ENCODE measurements at regions of chr17 and their contacts with region 1.

Region 1: DNA sequence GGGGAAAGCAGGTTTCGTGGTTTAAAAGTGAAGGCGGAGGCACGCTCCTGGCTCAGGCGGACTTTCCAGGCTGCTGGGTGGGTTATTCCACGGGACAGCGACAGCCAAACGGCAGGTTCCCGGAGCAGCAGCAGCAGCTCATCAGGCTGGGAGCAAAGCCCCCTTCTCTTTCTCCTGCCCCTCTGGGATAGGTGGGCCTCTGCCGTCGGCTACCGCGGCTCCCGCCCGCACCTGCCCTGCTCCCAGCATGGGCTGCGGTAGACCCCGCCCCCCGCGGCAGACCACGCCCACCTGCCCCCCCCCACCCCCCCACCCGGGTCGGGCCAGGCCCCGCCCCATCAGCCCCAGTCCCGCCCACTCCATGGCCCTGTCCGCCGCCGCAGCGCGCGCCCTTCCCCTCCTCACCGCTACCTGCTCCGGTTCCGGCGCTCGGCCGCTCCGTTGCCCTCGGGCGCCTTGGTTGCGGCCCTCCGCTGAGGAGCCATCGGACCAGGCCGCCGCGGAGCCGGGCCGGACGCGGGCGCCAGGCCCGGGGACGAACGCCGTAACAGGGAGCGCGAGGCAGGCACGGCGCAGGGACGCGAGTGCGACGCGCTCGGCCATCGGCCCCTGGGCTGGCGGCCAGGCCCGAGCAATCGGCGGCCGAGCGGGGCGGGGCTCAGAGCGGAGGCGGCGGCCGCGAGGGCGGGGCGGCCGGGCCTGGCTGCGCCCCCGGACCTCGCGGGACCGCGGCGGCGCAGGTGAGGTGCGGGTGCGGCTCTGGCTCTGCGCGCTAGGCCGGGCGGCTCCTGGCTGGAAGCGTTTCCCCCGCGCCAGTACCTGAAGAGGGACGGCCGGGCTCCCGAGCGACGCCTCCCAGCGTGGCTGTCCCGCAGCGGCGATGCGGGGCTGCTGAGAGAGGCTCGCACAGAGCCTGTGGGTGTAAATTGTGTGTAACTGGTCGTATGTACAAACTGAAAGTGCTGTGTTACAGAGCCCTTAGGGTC is at the starts of genes HEXD and OGFOD3:
- DNase-seq: peak; percentile 95
- ATAC-seq: peak; percentile 87
- H3K4me3 Mint-ChIP-seq: peak within 1 kb of the TSS; percentile 83
- H3K27ac Mint-ChIP-seq: peak within 1 kb of the TSS; percentile 69
- H3K4me1 Mint-ChIP-seq: peaks cover 29% of the 10 kb centered on the region
- H3K27me3 Mint-ChIP-seq: no peaks in the 10 kb centered on the region
- CTCF ChIP-seq: no peak
- total RNA-seq, gene HEXD: 69.5 and 88.8 TPM in 2 replicates
- total RNA-seq, gene OGFOD3: 29.5 and 35.0 TPM in 2 replicates

Region 2: GRCh38 chr17:82110298-82110697 is 308.0 kb before region 1 on chr17:
- CTCF ChIA-PET with region 1: no interaction called
- POLR2A ChIA-PET with region 1: no interaction called
- intact Hi-C with region 1: no loop called
- DNase-seq: no peak
- ATAC-seq: no peak
- H3K4me3 Mint-ChIP-seq: no peak overlapping the region
- H3K27ac Mint-ChIP-seq: no peak overlapping the region
- H3K4me1 Mint-ChIP-seq: peaks cover 27% of the 10 kb centered on the region
- H3K27me3 Mint-ChIP-seq: no peaks in the 10 kb centered on the region
- CTCF ChIP-seq: no peak

Region 3: GRCh38 chr17:82205719-82206508 is 212.4 kb before region 1 on chr17:
- CTCF ChIA-PET with region 1: no interaction called
- POLR2A ChIA-PET with region 1: no interaction called
- intact Hi-C with region 1: loop called (anchors 5 kb)
- DNase-seq: peak; percentile 71
- ATAC-seq: peak; percentile 99
- H3K4me3 Mint-ChIP-seq: peak overlapping the region; percentile 44
- H3K27ac Mint-ChIP-seq: peak overlapping the region; percentile 86
- H3K4me1 Mint-ChIP-seq: peaks cover 15% of the 10 kb centered on the region
- H3K27me3 Mint-ChIP-seq: no peaks in the 10 kb centered on the region
- CTCF ChIP-seq: peak; percentile 31

Region 4: GRCh38 chr17:82302991-82303943 is 115.0 kb before region 1 on chr17:
- CTCF ChIA-PET with region 1: no interaction called
- POLR2A ChIA-PET with region 1: interaction called, 10 read pairs
- intact Hi-C with region 1: no loop called
- DNase-seq: no peak
- ATAC-seq: no peak
- H3K4me3 Mint-ChIP-seq: no peak overlapping the region
- H3K27ac Mint-ChIP-seq: no peak overlapping the region
- H3K4me1 Mint-ChIP-seq: peaks cover 44% of the 10 kb centered on the region
- H3K27me3 Mint-ChIP-seq: no peaks in the 10 kb centered on the region
- CTCF ChIP-seq: no peak

Region 5: GRCh38 chr17:82434216-82434565 is 15.9 kb after region 1 on chr17:
- CTCF ChIA-PET with region 1: no interaction called
- POLR2A ChIA-PET with region 1: interaction called, 5 read pairs
- intact Hi-C with region 1: loop called (anchors 2 kb)
- DNase-seq: no peak
- ATAC-seq: peak; percentile 84
- H3K4me3 Mint-ChIP-seq: peak overlapping the region; percentile 50
- H3K27ac Mint-ChIP-seq: peak overlapping the region; percentile 78
- H3K4me1 Mint-ChIP-seq: peaks cover 45% of the 10 kb centered on the region
- H3K27me3 Mint-ChIP-seq: no peaks in the 10 kb centered on the region
- CTCF ChIP-seq: no peak

Region 6: GRCh38 chr17:82457997-82458864 is 39.9 kb after region 1 on chr17 and contains the start of gene NARF:
- CTCF ChIA-PET with region 1: no interaction called
- POLR2A ChIA-PET with region 1: interaction called, 17 read pairs
- intact Hi-C with region 1: loop called (anchors 1 kb)
- DNase-seq: peak; percentile 95
- ATAC-seq: peak; percentile 96
- H3K4me3 Mint-ChIP-seq: peak within 1 kb of the TSS; percentile 88
- H3K27ac Mint-ChIP-seq: peak within 1 kb of the TSS; percentile 96
- H3K4me1 Mint-ChIP-seq: peaks cover 19% of the 10 kb centered on the region
- H3K27me3 Mint-ChIP-seq: no peaks in the 10 kb centered on the region
- CTCF ChIP-seq: no peak
- total RNA-seq, gene NARF: 77.8 and 81.9 TPM in 2 replicates

Region 7: DNA sequence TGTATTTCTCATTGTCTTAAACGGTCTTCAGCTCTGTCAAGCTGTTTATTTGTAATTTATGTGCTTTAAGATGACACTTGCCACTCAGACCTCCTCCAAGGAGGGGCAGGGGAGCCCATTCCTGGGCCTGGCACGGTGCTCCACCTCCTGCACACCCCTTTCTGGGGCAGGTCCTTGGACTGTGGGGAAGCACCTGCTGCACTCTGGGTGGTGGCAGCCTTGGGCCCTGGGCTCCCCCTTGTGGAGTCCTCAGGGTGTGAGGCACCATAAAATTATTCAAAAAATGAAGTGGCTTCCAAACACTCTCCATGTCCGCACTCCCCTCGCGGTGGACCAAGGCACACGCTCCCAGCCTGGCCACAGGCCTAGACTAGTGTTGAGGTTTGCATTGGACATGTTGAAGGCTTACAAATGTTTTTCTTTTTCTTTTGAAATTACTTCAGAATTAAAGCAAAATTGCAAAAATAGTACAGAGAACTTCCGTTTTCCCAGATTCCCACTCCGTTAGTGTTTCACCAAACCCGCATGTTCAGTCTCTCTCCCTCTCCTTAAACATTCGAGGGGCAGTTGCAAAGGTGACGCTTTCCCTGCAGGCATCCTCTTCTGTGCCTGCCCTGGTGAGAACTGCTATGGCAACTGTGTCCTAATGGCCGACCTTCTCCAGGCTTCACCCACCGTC is 133.6 kb after region 1 on chr17:
- CTCF ChIA-PET with region 1: no interaction called
- POLR2A ChIA-PET with region 1: no interaction called
- intact Hi-C with region 1: loop called (anchors 1 kb)
- DNase-seq: peak; percentile 71
- ATAC-seq: peak; percentile 99
- H3K4me3 Mint-ChIP-seq: no peak overlapping the region
- H3K27ac Mint-ChIP-seq: no peak overlapping the region
- H3K4me1 Mint-ChIP-seq: peaks cover 49% of the 10 kb centered on the region
- H3K27me3 Mint-ChIP-seq: no peaks in the 10 kb centered on the region
- CTCF ChIP-seq: no peak

Measured in activated B cell treated with CpG ODN at 0.5 μM for 24 hours (primary cell).